ENCODE measurements at regions of chr11 and their contacts with region 1.

Region 1: GRCh38 chr11:33700425-33701271 is at the start of gene C11orf91:
- DNase-seq: peak; percentile 97 to 99
- ATAC-seq: peak; percentile 96
- H3K4me3 ChIP-seq: peak within 1 kb of the TSS; percentile 2 to 38
- H3K27ac ChIP-seq: no peak within 1 kb of the TSS
- H3K4me1 ChIP-seq: no peaks in the 10 kb centered on the region
- H3K27me3 ChIP-seq: no peaks in the 10 kb centered on the region
- total RNA-seq, gene C11orf91: 0.97 TPM in 1 of 2 donors, not detected in the other

Region 2: GRCh38 chr11:33773987-33774735 is 73.5 kb after region 1 on chr11 and contains the start of gene FBXO3:
- intact Hi-C with region 1: loop called in 1 of 2 experiments (anchors 2 kb)
- DNase-seq: peak; percentile 92 to 94
- ATAC-seq: peak; percentile 97
- H3K4me3 ChIP-seq: peak within 1 kb of the TSS; percentile 75 to 94
- H3K27ac ChIP-seq: peak within 1 kb of the TSS in 1 of 2 donors; percentile 84
- H3K4me1 ChIP-seq: no peaks in the 10 kb centered on the region
- H3K27me3 ChIP-seq: no peaks in the 10 kb centered on the region
- total RNA-seq, gene FBXO3: 33.7 to 35.8 TPM

Measured in aorta (tissue), 5 donors.